ENCODE measurements at regions of chr20 and their contacts with region 1.

Region 1: GRCh38 chr20:58692594-58693226 is at the start of gene NPEPL1:
- DNase-seq: peak; percentile 67
- ATAC-seq: peak; percentile 94
- H3K4me3 ChIP-seq: peak within 1 kb of the TSS; percentile 43
- H3K27ac ChIP-seq: peak within 1 kb of the TSS; percentile 31; the same call in 1 of the 2 replicates
- H3K4me1 ChIP-seq: peaks cover 19% of the 10 kb centered on the region
- H3K27me3 ChIP-seq: no peaks in the 10 kb centered on the region
- CTCF ChIP-seq: peak; percentile 45
- POLR2A ChIP-seq: no peak
- RAD21 ChIP-seq: peak; percentile 34
- total RNA-seq, gene NPEPL1: 6.3 and 7.2 TPM in 2 replicates

Region 2: DNA sequence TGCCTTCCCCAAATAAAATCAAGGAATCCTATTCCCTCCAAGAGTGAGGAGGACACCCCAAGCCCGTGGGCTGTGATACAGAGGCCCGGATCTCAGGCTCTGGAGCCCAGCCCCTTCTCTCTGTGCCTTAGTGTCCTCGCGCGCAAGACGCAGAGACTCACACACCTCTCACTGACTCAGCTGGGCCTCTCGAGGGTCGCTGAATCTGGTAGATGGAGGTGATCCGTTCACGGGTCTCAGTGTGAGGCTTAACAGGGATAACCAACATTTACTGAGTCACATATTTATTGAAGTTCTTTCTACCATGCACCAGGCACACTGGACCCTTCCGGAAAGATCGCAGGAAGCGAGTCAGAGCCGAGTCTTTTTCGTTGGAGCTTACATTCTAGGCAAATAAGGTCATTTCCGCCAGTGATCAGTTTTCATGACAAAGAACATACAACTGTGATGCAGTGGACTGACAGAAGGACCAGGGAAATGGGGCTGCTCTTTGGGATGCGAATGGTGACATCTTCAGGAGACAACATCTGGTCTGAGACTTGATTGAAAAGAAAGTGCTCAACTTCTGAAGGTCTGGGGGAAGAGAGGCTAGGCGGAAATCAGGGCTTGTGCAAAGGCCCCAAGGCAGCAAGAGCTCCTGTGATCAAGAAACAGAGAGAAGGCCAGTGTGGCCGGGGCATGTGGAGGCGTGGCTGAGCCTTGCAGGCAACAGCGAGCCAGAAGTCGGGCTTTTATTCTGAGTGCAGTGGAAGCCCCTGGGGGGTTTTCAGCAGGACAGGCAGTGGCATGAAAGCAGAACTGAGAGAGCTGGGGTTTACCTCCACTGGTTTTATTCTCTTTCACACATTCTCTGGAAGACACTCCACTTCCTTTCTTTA is 234.3 kb before region 1 on chr20:
- CTCF ChIA-PET with region 1: no interaction called
- POLR2A ChIA-PET with region 1: interaction called, 14 read pairs
- dilution Hi-C with region 1: no loop called
- in situ Hi-C with region 1: no loop called
- intact Hi-C with region 1: no loop called
- DNase-seq: peak; percentile 76
- ATAC-seq: no peak
- H3K4me3 ChIP-seq: no peak overlapping the region
- H3K27ac ChIP-seq: no peak overlapping the region; the same call in 1 of the 2 replicates
- H3K4me1 ChIP-seq: 0 out of 2 replicates have a peak, but pooled peaks cover 1% of the 10 kb centered on the region
- H3K27me3 ChIP-seq: no peaks in the 10 kb centered on the region
- CTCF ChIP-seq: no peak
- POLR2A ChIP-seq: no peak
- RAD21 ChIP-seq: no peak

Region 3: DNA sequence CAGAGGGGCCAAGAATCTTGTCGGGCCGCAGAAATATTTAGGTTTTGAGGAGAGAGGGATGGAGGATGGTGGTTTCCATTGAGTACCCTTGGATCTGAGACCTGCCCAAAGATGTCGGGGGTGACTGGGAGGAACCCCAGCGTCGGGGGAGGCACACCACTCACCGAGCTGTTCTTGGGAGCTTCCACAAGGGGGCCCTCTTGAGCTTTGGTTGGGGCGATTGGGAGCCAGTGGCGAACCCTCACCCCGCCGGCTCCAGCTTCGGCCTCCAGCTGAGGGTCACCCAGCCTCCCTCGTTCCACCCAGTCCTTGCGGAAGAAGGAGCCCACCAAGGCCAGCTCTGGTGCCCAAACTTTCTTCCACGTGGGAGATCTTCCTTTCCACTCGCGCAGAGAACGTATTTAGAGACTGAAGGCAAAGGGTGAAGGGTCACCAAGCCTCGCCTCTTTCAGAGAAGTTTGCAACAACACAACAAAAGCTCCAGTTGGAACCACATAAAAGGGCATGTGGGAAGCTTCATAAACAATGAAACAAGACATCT is 211.2 kb before region 1 on chr20:
- CTCF ChIA-PET with region 1: no interaction called
- POLR2A ChIA-PET with region 1: no interaction called
- dilution Hi-C with region 1: no loop called
- in situ Hi-C with region 1: no loop called
- intact Hi-C with region 1: loop called (anchors 5 kb)
- DNase-seq: no peak
- ATAC-seq: peak; percentile 56
- H3K4me3 ChIP-seq: no peak overlapping the region
- H3K27ac ChIP-seq: no peak overlapping the region
- H3K4me1 ChIP-seq: no peaks in the 10 kb centered on the region
- H3K27me3 ChIP-seq: no peaks in the 10 kb centered on the region
- CTCF ChIP-seq: peak; percentile 55
- POLR2A ChIP-seq: no peak
- RAD21 ChIP-seq: peak; percentile 79

Region 4: GRCh38 chr20:58675146-58675584 is 17.5 kb before region 1 on chr20:
- CTCF ChIA-PET with region 1: no interaction called
- POLR2A ChIA-PET with region 1: no interaction called
- dilution Hi-C with region 1: no loop called
- in situ Hi-C with region 1: no loop called
- intact Hi-C with region 1: no loop called
- DNase-seq: no peak
- ATAC-seq: no peak
- H3K4me3 ChIP-seq: no peak overlapping the region
- H3K27ac ChIP-seq: no peak overlapping the region
- H3K4me1 ChIP-seq: peaks cover 2% of the 10 kb centered on the region; the same call in 1 of the 2 replicates
- H3K27me3 ChIP-seq: no peaks in the 10 kb centered on the region
- CTCF ChIP-seq: no peak
- POLR2A ChIP-seq: no peak
- RAD21 ChIP-seq: no peak

Measured in IMR-90 (cell line).